ENCODE measurements at regions of chr1 and their contacts with region 1.

Region 1: GRCh38 chr1:22416555-22417454 is 34.8 kb upstream of the ZBTB40 start:
- DNase-seq: peak; percentile 42 to 83 (median 75)
- ATAC-seq: peak; percentile 87
- H3K4me3 ChIP-seq: no peak overlapping the region
- H3K4me3 Mint-ChIP-seq: no peak overlapping the region
- H3K27ac ChIP-seq: no peak overlapping the region
- H3K27ac Mint-ChIP-seq: no peak overlapping the region
- H3K4me1 ChIP-seq: peaks cover 5% of the 10 kb centered on the region
- H3K4me1 Mint-ChIP-seq: peaks cover 7% of the 10 kb centered on the region
- H3K27me3 ChIP-seq: peaks cover 4 to 9% of the 10 kb centered on the region in 2 experiments
- H3K27me3 Mint-ChIP-seq: peaks cover 41% of the 10 kb centered on the region
- CTCF ChIP-seq: peak; percentile 73

Region 2: GRCh38 chr1:22131875-22132486 is 284.8 kb before region 1 on chr1:
- CTCF ChIA-PET with region 1: interaction called, 20 read pairs
- POLR2A ChIA-PET with region 1: no interaction called
- intact Hi-C with region 1: loop called (anchors 1 to 10 kb)
- DNase-seq: peak in 8 of 9 experiments; percentile 30 to 72 (median 58)
- ATAC-seq: peak; percentile 38
- H3K4me3 ChIP-seq: no peak overlapping the region
- H3K4me3 Mint-ChIP-seq: no peak overlapping the region
- H3K27ac ChIP-seq: no peak overlapping the region
- H3K27ac Mint-ChIP-seq: no peak overlapping the region
- H3K4me1 ChIP-seq: no peaks in the 10 kb centered on the region
- H3K4me1 Mint-ChIP-seq: no peaks in the 10 kb centered on the region
- H3K27me3 ChIP-seq: no peaks in the 10 kb centered on the region
- H3K27me3 Mint-ChIP-seq: peaks cover 2% of the 10 kb centered on the region
- CTCF ChIP-seq: peak; percentile 52

Region 3: DNA sequence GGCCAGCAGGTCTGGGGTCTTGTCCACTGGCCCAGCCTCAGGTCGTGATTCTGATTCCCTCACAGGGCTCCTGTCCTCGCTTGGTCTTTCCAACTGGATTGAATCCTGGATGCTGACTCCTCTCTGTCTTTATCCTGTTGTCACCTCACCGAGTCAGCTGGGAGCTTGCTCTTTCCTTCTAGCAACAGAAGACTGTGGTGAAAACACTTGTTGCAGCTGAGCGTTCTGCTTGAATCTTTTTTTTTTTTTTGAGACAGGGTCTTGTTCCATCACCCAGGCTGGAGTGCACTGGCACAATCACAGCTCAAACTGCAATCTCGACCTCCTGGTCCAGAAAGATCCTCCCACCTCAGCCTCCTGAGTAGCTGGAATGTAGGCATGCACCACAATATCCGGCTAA is 265.9 kb before region 1 on chr1:
- CTCF ChIA-PET with region 1: no interaction called
- POLR2A ChIA-PET with region 1: no interaction called
- intact Hi-C with region 1: no loop called
- DNase-seq: no peak
- ATAC-seq: no peak
- H3K4me3 ChIP-seq: no peak overlapping the region
- H3K4me3 Mint-ChIP-seq: no peak overlapping the region
- H3K27ac ChIP-seq: no peak overlapping the region
- H3K27ac Mint-ChIP-seq: no peak overlapping the region
- H3K4me1 ChIP-seq: no peaks in the 10 kb centered on the region
- H3K4me1 Mint-ChIP-seq: no peaks in the 10 kb centered on the region
- H3K27me3 ChIP-seq: peaks cover 0 to 6% of the 10 kb centered on the region in 2 experiments
- H3K27me3 Mint-ChIP-seq: peaks cover 48% of the 10 kb centered on the region
- CTCF ChIP-seq: no peak

Region 4: DNA sequence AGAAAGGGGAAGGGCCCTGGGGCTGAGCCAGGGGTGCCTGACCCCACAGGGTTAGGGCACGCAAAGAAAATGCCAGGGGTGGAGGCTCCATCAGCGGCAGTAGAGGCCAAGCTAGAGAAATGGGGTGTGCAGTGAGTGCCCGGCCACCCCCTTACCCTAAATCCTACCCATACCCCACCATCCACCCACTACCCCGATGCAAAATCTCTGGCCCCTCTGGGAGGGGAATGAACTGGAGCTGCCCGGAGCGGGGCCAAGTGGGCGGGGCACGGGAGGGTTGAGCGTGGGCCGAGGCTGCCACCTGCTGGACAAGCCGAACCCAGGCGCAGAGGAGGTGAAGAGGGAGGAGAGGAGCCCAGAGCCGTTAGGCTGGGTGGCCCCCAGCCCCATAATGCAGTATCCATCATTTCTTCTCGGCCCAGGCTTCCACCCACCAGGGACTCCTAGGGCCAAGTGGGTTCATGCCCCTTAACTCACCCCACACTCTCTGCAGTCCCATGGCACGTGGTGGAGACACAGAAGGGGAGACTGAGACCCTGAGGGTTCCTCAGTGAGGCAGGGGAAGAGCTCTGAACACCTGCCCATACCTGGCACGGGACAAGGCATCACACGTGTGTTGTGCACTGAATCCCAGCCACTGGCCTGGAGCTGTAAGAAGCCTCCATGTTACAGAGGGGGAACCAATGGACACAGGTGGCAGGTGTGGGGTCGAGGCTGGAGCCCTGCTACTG is 225.3 kb after region 1 on chr1:
- CTCF ChIA-PET with region 1: interaction called, 25 read pairs
- POLR2A ChIA-PET with region 1: no interaction called
- intact Hi-C with region 1: loop called in 1 of 2 experiments (anchors 1 kb)
- DNase-seq: peak; percentile 42 to 79 (median 66)
- ATAC-seq: peak; percentile 57
- H3K4me3 ChIP-seq: no peak overlapping the region
- H3K4me3 Mint-ChIP-seq: no peak overlapping the region
- H3K27ac ChIP-seq: no peak overlapping the region
- H3K27ac Mint-ChIP-seq: no peak overlapping the region
- H3K4me1 ChIP-seq: no peaks in the 10 kb centered on the region
- H3K4me1 Mint-ChIP-seq: no peaks in the 10 kb centered on the region
- H3K27me3 ChIP-seq: peaks cover 0 to 11% of the 10 kb centered on the region in 2 experiments
- H3K27me3 Mint-ChIP-seq: peaks cover 19% of the 10 kb centered on the region
- CTCF ChIP-seq: peak; percentile 59

Region 5: DNA sequence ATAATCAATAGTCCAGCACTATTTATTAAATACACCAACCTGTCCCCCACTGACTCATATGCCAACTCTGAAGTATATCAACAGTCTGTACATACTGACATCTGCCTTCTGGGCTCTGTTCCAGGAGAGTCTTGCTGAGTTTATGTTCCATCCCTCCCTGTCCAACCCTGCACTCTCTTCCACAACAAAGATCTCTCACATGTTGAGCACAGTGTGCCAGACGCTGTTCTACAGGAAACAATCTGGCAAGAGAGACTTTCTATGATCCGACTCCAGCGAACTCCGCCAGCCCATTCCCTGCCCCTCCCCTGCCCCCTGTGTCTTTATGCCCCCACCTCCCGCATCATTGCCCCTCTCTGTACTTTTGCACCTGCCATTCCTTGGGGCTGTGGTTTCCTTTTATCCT is 552.5 kb after region 1 on chr1:
- CTCF ChIA-PET with region 1: no interaction called
- POLR2A ChIA-PET with region 1: no interaction called
- intact Hi-C with region 1: loop called in 1 of 2 experiments (anchors 10 kb)
- DNase-seq: no peak
- ATAC-seq: no peak
- H3K4me3 ChIP-seq: no peak overlapping the region
- H3K4me3 Mint-ChIP-seq: no peak overlapping the region
- H3K27ac ChIP-seq: no peak overlapping the region
- H3K27ac Mint-ChIP-seq: no peak overlapping the region
- H3K4me1 ChIP-seq: no peaks in the 10 kb centered on the region
- H3K4me1 Mint-ChIP-seq: no peaks in the 10 kb centered on the region
- H3K27me3 ChIP-seq: no peaks in the 10 kb centered on the region
- H3K27me3 Mint-ChIP-seq: peaks cover 45% of the 10 kb centered on the region
- CTCF ChIP-seq: no peak

Measured in CD8-positive, alpha-beta T cell (primary cell).